Activated CD4-positive, alpha-beta memory T cell treated with anti-CD3 and anti-CD28 coated beads for 36 hours (primary cell): ENCODE measurements at regions of chr16 and their contacts with region 1.

Region 1: GRCh38 chr16:28990375-28991040 is 5.7 kb downstream of the LAT start:
- DNase-seq: peak; percentile 89
- H3K4me3 Mint-ChIP-seq: peak overlapping the region; percentile 69
- H3K27ac Mint-ChIP-seq: peak overlapping the region; percentile 98
- H3K4me1 Mint-ChIP-seq: peaks cover 50% of the 10 kb centered on the region
- H3K27me3 Mint-ChIP-seq: no peaks in the 10 kb centered on the region

Region 2: GRCh38 chr16:28935924-28936783 is 54.4 kb before region 1 on chr16:
- CTCF ChIA-PET with region 1: no interaction called
- POLR2A ChIA-PET with region 1: no interaction called
- intact Hi-C with region 1: no loop called
- DNase-seq: peak; percentile 92
- H3K4me3 Mint-ChIP-seq: peak overlapping the region; percentile 56
- H3K27ac Mint-ChIP-seq: no peak overlapping the region
- H3K4me1 Mint-ChIP-seq: peaks cover 10% of the 10 kb centered on the region
- H3K27me3 Mint-ChIP-seq: no peaks in the 10 kb centered on the region

Region 3: GRCh38 chr16:28950648-28951409 is 39.7 kb before region 1 on chr16 and contains the start of gene NFATC2IP:
- CTCF ChIA-PET with region 1: no interaction called
- POLR2A ChIA-PET with region 1: no interaction called
- intact Hi-C with region 1: no loop called
- DNase-seq: peak; percentile 100
- H3K4me3 Mint-ChIP-seq: peak within 1 kb of the TSS; percentile 95
- H3K27ac Mint-ChIP-seq: peak within 1 kb of the TSS; percentile 91
- H3K4me1 Mint-ChIP-seq: peaks cover 24% of the 10 kb centered on the region
- H3K27me3 Mint-ChIP-seq: no peaks in the 10 kb centered on the region
- total RNA-seq, gene NFATC2IP: 57.7 to 64.6 TPM

Region 4: DNA sequence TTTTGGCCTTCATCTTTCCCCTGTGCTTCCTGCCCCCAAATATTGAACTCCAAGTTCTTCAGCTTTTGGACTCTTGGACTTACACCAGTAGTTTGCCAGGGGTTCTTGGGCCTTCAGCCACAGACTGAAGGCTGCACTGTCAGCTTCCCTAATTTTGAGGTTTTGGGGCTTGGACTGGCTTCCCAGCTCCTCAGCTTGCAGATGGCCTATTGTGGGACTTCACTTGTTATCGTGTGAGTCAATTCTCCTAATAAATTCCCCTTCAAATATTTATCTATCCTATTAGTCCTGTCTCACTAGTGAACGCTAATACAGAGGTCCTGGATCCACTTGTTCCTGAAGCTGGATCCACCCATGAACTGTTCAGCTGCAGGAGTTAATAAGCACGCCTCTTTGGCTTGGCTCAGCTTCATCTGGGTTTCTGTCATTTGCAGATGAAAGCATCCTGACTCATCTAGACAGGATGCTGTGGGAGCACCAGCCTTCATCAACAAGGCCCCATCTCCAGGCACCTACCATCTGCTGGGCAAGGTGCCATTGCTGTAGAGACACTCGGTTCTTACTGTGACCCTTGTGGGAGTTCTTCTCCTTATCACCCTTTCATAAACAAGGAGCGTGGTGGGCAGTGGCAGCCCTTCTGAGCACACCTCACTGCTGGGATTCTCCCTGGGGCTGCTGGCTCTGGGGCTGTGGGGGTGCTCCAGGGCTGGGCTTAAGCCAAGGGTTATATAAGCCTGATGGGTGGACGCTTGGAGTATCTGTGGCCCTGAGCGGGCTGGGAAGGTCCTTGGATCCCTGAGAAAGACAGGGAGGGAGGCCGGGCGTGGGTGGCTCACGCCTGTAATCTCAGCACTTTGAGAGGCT is 17.5 kb after region 1 on chr16:
- CTCF ChIA-PET with region 1: no interaction called
- POLR2A ChIA-PET with region 1: interaction called, 4 read pairs
- intact Hi-C with region 1: loop called (anchors 1 kb)
- DNase-seq: peak; percentile 89
- H3K4me3 Mint-ChIP-seq: peak overlapping the region; percentile 34
- H3K27ac Mint-ChIP-seq: peak overlapping the region; percentile 88
- H3K4me1 Mint-ChIP-seq: peaks cover 54% of the 10 kb centered on the region
- H3K27me3 Mint-ChIP-seq: no peaks in the 10 kb centered on the region